Mammary epithelial cell (primary cell): ENCODE measurements at regions of chr12 and their contacts with region 1.

Region 1: GRCh38 chr12:25436203-25437030 is 116.7 kb downstream of the LMNTD1 start:
- DNase-seq: peak; percentile 56
- H3K4me3 ChIP-seq: peak overlapping the region; percentile 3 to 46 (median 24)
- H3K27ac ChIP-seq: peak overlapping the region; percentile 41
- H3K4me1 ChIP-seq: peaks cover 21% of the 10 kb centered on the region
- H3K27me3 ChIP-seq: no peaks in the 10 kb centered on the region
- CTCF ChIP-seq: peak; percentile 80 to 85

Region 2: GRCh38 chr12:25151476-25151875 is 284.9 kb before region 1 on chr12:
- CTCF ChIA-PET with region 1: no interaction called
- dilution Hi-C with region 1: no loop called
- in situ Hi-C with region 1: no loop called
- intact Hi-C with region 1: no loop called
- DNase-seq: peak; percentile 86
- H3K4me3 ChIP-seq: no peak overlapping the region
- H3K27ac ChIP-seq: no peak overlapping the region
- H3K4me1 ChIP-seq: peaks cover 6% of the 10 kb centered on the region
- H3K27me3 ChIP-seq: no peaks in the 10 kb centered on the region
- CTCF ChIP-seq: no peak

Region 3: GRCh38 chr12:25557830-25558436 is 121.5 kb after region 1 on chr12:
- CTCF ChIA-PET with region 1: no interaction called
- dilution Hi-C with region 1: no loop called
- in situ Hi-C with region 1: loop called in 1 of 2 experiments (anchors 25 kb)
- intact Hi-C with region 1: loop called (anchors 1 kb)
- DNase-seq: peak; percentile 45
- H3K4me3 ChIP-seq: no peak overlapping the region
- H3K27ac ChIP-seq: peak overlapping the region; percentile 4
- H3K4me1 ChIP-seq: no peaks in the 10 kb centered on the region
- H3K27me3 ChIP-seq: no peaks in the 10 kb centered on the region
- CTCF ChIP-seq: peak; percentile 38 to 62

Region 4: DNA sequence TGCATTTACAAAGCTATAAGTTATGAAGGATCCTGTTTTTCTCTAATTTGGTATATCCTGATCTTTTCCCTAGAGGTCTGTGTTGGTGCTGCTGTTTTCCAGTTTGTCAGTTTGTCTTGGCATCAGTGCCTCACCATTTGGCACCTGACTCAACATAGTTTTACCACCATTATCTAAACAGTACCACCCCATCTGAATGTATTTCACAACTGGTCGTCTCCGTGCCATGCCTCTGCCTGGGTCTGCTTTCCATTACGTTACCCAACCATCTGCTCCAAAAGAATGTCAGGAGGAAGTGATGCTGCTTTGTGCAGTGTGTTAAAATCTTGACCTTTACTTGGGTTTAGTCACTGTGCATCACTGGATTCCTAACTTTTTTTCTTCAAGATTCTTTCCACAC is 392.8 kb after region 1 on chr12:
- CTCF ChIA-PET with region 1: no interaction called
- dilution Hi-C with region 1: no loop called
- in situ Hi-C with region 1: no loop called
- intact Hi-C with region 1: loop called (anchors 10 kb)
- DNase-seq: peak; percentile 82
- H3K4me3 ChIP-seq: no peak overlapping the region
- H3K27ac ChIP-seq: no peak overlapping the region
- H3K4me1 ChIP-seq: no peaks in the 10 kb centered on the region
- H3K27me3 ChIP-seq: no peaks in the 10 kb centered on the region
- CTCF ChIP-seq: no peak

Region 5: DNA sequence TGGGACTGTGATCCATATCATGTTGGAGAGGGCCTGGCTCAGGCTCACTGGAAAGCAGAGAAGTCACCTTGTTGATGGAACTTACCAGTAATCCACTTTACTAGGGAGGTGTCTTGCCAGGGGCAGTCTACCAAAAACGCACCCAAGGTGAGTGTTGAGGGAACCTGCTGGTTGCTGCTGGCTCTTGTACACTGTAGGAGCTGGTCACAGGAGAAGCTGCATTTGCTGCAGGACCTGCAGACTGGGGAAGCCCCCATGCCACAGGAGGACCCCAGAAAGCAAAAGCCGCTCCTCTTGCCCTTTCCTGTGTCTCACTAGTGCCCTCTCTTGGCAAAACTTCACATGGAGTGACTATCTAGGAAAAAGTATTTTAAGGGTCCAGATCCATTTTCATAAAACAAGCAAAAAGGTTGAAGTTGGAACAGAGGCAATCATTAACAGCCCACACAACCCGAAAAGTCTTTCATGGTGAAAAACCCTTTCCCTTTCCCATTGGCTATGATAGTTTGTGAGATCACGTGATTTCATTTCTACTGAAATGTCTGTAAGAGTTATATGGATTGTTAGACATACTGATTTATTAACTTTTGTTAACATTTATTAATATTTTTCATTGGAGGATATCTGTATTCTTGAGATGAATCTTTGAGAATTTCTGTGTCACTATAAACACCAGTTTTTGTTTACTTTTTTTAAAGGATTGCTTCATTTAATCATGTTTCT is 581.2 kb after region 1 on chr12:
- CTCF ChIA-PET with region 1: no interaction called
- dilution Hi-C with region 1: no loop called
- in situ Hi-C with region 1: loop called (anchors 10 kb)
- intact Hi-C with region 1: loop called (anchors 1 kb)
- DNase-seq: peak; percentile 26
- H3K4me3 ChIP-seq: no peak overlapping the region
- H3K27ac ChIP-seq: no peak overlapping the region
- H3K4me1 ChIP-seq: peaks cover 2% of the 10 kb centered on the region
- H3K27me3 ChIP-seq: no peaks in the 10 kb centered on the region
- CTCF ChIP-seq: peak; percentile 55 to 68